ENCODE measurements at regions of chr3 and their contacts with region 1.

Region 1: GRCh38 chr3:113211330-113212149 is at the start of gene BOC:
- DNase-seq: peak; percentile 57
- H3K4me3 ChIP-seq: peak within 1 kb of the TSS; percentile 79 to 92 (median 80)
- H3K27ac ChIP-seq: peak within 1 kb of the TSS; percentile 40
- H3K4me1 ChIP-seq: peaks cover 15% of the 10 kb centered on the region
- H3K27me3 ChIP-seq: no peaks in the 10 kb centered on the region
- CTCF ChIP-seq: no peak
- total RNA-seq, gene BOC: 18.5 to 49.7 TPM

Region 2: GRCh38 chr3:113136071-113136470 is 75.5 kb before region 1 on chr3:
- CTCF ChIA-PET with region 1: interaction called, 3 read pairs
- dilution Hi-C with region 1: no loop called
- in situ Hi-C with region 1: no loop called
- intact Hi-C with region 1: loop called (anchors 1 kb)
- DNase-seq: peak; percentile 17
- H3K4me3 ChIP-seq: no peak overlapping the region
- H3K27ac ChIP-seq: no peak overlapping the region
- H3K4me1 ChIP-seq: peaks cover 8% of the 10 kb centered on the region
- H3K27me3 ChIP-seq: no peaks in the 10 kb centered on the region
- CTCF ChIP-seq: peak; percentile 47 to 61

Region 3: GRCh38 chr3:113231827-113232253 is 20.3 kb after region 1 on chr3:
- CTCF ChIA-PET with region 1: interaction called, 3 read pairs
- dilution Hi-C with region 1: no loop called
- in situ Hi-C with region 1: no loop called
- intact Hi-C with region 1: loop called (anchors 1 kb)
- DNase-seq: peak; percentile 89
- H3K4me3 ChIP-seq: no peak overlapping the region
- H3K27ac ChIP-seq: peak overlapping the region; percentile 93
- H3K4me1 ChIP-seq: peaks cover 43% of the 10 kb centered on the region
- H3K27me3 ChIP-seq: no peaks in the 10 kb centered on the region
- CTCF ChIP-seq: no peak

Region 4: GRCh38 chr3:113249111-113249510 is 37.6 kb after region 1 on chr3:
- CTCF ChIA-PET with region 1: no interaction called
- dilution Hi-C with region 1: no loop called
- in situ Hi-C with region 1: no loop called
- intact Hi-C with region 1: loop called (anchors 1 kb)
- DNase-seq: peak; percentile 84
- H3K4me3 ChIP-seq: no peak overlapping the region
- H3K27ac ChIP-seq: peak overlapping the region; percentile 69
- H3K4me1 ChIP-seq: peaks cover 33% of the 10 kb centered on the region
- H3K27me3 ChIP-seq: no peaks in the 10 kb centered on the region
- CTCF ChIP-seq: no peak

Region 5: DNA sequence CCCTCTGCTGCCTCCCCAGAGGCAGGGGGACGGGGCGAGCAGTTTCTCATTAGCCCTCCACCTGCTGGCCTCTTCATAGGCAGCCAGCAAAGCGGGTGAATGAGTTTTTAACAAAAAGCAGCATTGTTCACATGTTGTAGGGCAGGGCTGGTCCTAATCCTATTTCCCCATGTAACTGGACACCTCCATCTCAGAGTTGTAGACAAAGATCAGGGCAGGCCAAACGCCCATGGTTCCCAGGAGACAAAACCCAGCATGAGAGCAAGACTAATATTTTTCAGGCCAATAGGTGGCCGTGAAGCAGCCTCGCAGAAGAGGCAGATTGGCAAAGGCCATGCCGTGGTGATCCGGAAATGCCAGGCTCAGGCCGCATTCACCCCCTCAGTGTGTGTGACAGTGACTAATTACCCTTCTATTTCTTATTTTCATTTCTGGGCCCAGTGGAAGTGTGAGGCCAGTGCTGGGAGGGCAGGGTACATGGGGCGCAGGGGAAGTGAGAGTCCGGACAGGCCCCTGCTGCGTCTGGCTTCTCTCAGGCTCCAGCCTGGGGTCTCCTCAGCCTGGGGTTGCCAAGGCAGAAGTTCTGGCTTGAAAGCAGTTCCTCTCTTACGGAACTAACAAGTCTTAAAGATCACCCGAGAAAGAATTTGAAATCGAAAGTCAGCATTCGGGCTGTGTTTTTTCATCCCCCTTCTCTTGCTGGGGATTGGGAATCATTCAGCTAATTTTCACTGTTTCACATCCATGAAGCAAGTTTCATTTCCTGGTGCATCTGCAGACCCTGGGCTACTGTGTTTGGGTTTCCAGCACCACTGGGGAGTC is 64.6 kb after region 1 on chr3:
- CTCF ChIA-PET with region 1: interaction called, 5 read pairs
- dilution Hi-C with region 1: no loop called
- in situ Hi-C with region 1: no loop called
- intact Hi-C with region 1: loop called (anchors 2 kb)
- DNase-seq: peak; percentile 70
- H3K4me3 ChIP-seq: peak overlapping the region in 1 of 3 experiments; percentile 20
- H3K27ac ChIP-seq: peak overlapping the region; percentile 4
- H3K4me1 ChIP-seq: peaks cover 17% of the 10 kb centered on the region
- H3K27me3 ChIP-seq: no peaks in the 10 kb centered on the region
- CTCF ChIP-seq: peak; percentile 14 to 21

Measured in mammary epithelial cell (primary cell).